ENCODE measurements at regions of chr1 and their contacts with region 1.

Region 1: GRCh38 chr1:167220537-167221125 is at the start of gene POU2F1:
- DNase-seq: peak; percentile 96

Region 2: DNA sequence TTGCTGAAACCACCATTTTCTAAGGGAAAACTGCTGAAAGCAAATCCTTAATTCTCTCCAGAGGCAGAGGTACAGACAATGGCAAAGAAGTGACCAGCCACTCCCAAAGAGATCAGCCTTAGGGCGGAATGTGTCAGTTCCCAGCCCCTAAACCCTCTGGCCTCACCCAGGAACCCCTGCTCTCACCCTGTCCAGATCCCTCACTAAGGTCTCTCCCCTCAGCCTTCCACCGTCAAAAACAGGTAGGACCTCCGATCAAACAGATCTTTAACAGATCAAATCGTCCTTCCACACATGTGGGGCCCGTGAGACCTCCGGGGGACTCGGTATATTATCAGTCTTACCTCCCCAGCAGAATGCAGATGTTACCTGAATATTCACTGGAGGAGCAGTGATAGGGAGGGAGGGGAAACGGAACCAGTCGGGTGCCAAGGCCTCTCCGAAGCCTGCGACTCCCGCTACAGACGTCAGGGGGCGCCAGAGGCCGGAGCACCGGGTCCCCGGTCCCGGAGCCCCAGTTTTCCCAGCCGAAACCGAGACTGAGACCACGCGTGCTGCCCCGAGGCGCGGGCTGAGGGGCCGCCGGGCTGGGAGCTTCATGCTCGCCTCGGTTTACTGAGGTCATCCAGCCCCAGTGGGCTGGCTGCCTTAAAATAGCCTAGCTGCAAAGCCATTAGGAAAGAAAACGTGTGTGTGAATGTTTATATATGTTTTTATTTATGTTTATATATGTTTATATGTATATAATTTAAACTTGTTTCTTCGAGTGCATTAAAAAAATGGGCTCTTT is 154.1 kb before region 1 on chr1:
- CTCF ChIA-PET with region 1: interaction called, 9 read pairs
- POLR2A ChIA-PET with region 1: interaction called, 31 read pairs
- DNase-seq: peak; percentile 94

Region 3: GRCh38 chr1:167165948-167166689 is 54.5 kb before region 1 on chr1:
- CTCF ChIA-PET with region 1: interaction called, 3 read pairs
- POLR2A ChIA-PET with region 1: interaction called, 15 read pairs
- DNase-seq: peak; percentile 35

Region 4: DNA sequence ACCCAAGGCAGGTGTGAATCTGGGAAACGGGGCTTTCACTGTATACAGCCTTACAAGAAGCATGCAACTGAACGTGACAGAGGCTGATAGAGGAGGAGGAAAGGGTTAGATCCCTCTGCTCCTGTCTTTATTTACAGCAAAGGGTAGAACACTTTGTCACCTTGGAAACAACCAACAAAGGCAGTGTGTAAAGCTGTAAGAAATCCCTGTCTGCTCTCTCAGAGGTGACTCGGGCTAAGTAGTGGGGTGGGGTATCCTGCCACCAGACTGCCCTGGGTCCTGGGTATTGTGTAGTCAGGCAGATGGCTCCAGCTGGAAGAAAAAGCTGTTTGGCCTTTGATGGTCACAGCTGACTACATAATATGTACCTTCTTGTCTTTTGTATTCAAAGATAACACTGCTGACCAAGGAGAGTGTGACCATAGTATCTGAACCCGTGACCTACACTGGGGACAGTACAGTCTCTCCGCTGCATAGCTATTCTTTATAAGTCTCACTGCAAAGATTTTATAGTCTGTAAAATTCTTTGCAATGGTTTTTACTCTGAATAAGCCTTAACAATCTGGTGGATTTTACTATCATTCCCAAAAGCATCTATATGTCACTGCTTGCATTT is 22.0 kb before region 1 on chr1:
- CTCF ChIA-PET with region 1: no interaction called
- POLR2A ChIA-PET with region 1: interaction called, 16 read pairs
- DNase-seq: no peak

Region 5: GRCh38 chr1:167232801-167233200 is 12.2 kb after region 1 on chr1:
- CTCF ChIA-PET with region 1: interaction called, 8 read pairs
- POLR2A ChIA-PET with region 1: interaction called, 16 read pairs
- DNase-seq: no peak

Region 6: DNA sequence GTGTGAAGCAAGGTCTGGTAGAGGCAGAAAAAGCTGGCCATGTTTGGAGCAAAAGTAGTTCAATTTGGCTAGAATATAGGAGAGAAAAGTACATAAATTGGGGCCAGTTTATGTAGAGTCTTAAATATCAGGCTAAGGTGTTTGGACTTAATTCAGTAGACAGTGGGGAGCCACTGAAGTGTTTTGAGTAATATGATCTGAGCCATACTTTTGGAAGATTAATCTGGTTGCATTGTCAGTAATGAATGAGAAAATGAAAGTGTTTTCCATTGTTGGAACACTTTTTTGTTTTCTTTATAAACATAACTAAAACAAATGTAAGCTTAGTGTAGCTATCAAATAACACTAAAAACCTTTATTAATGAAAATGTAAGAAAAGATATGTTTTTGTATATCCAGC is 42.2 kb after region 1 on chr1:
- CTCF ChIA-PET with region 1: interaction called, 4 read pairs
- POLR2A ChIA-PET with region 1: interaction called, 11 read pairs
- DNase-seq: no peak

Region 7: DNA sequence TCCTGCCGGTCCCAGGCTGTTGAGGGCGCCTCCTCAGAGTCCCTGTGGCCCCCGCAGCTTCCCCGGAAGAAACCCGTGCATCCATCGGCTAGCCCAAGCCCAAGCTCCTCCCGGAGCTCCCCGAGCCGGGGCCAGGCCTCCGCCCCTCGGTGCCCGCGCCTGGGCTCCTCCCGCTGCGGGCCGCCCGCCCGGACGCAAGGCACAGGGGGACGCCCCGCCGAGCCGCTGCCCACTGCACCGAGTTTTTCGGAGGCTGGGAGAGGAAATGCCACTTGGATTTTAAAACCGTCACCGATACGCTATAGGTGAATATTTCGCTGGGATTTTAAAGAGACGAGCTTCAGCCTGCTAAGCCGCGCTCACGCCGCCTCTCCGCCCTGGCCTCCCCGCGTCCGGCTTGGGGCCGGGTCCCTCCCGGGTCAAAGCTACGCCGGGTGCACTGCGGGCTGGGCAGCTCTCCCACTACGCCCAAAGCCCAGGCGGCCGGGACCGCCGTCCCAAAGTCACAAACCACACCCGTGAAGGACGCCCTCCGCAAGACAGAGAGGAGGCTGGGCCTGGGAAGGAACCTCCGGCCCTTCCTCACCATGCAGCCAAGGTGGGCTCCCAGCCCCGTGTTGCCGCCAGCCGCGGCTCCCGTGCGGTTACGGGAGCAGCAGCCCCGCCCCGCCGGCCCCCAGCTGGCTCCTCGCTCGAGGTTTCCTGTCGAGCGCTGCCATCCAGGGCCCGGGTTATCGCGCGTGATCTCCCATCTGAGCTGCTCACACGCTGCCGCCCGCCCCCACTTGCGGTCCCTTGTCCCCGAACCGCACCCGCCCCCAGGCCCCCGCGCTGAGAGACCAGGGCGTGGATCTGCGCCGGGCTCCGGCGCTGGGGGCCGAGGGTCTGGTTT is 234.5 kb after region 1 on chr1:
- CTCF ChIA-PET with region 1: no interaction called
- POLR2A ChIA-PET with region 1: interaction called, 10 read pairs
- DNase-seq: peak; percentile 68

Measured in HEK293T (cell line).